H1 (cell line): ENCODE measurements at regions of chr10 and their contacts with region 1.

Region 1: GRCh38 chr10:51960494-51960895 is 261.1 kb upstream of the CSTF2T start:
- DNase-seq: no peak
- H3K4me3 ChIP-seq: 0 out of 8 replicates have a peak overlapping the region, but pooled peaks of 1 of the 4 experiments have one; percentile 20
- H3K27ac ChIP-seq: no peak overlapping the region
- H3K4me1 ChIP-seq: peaks cover 0 to 4% (median 3%) of the 10 kb centered on the region in 4 experiments; a peak in 4 of 7 replicates
- H3K27me3 ChIP-seq: no peaks in the 10 kb centered on the region
- CTCF ChIP-seq: peak in 2 of 3 experiments; percentile 31 to 44; a peak in 2 of 4 replicates
- EP300 ChIP-seq: no peak
- POLR2A ChIP-seq: no peak
- RAD21 ChIP-seq: peak; percentile 70 to 78

Region 2: DNA sequence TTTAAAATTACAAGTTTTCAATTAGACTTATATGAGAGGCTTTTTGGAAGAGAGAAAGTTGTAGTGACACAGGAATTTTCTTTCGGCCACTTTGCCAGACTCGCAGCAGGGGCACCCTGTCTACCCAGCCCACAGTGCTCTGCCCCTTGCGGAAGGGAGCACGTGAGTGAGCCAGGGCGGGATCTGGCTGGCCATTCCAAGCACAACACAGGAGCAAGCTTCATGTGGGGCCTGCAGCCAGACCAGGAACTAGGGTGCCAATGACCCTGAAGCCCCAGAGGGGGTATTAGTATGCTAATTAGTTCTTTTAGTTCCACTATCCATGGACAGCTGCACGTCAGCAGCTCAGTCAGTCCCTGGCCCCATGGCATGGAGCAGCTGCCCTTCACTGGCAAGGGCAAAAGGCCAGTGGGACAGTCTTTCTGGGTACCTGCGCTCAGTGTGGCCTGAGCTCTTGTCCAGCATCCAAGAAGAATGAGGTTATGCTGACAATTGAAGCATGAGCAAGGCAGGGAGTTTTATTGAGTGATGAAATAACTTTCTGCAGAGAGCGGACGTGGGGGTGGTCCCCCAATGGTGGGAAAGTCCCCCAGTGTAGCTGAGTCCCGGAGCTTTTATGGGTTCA is 10.0 kb before region 1 on chr10:
- CTCF ChIA-PET with region 1: interaction called, 10 read pairs
- POLR2A ChIA-PET with region 1: no interaction called
- DNase-seq: no peak
- H3K4me3 ChIP-seq: no peak overlapping the region
- H3K27ac ChIP-seq: no peak overlapping the region
- H3K4me1 ChIP-seq: peaks cover 0 to 4% (median 3%) of the 10 kb centered on the region in 4 experiments; a peak in 4 of 7 replicates
- H3K27me3 ChIP-seq: no peaks in the 10 kb centered on the region
- CTCF ChIP-seq: no peak
- EP300 ChIP-seq: no peak
- POLR2A ChIP-seq: no peak
- RAD21 ChIP-seq: no peak

Region 3: DNA sequence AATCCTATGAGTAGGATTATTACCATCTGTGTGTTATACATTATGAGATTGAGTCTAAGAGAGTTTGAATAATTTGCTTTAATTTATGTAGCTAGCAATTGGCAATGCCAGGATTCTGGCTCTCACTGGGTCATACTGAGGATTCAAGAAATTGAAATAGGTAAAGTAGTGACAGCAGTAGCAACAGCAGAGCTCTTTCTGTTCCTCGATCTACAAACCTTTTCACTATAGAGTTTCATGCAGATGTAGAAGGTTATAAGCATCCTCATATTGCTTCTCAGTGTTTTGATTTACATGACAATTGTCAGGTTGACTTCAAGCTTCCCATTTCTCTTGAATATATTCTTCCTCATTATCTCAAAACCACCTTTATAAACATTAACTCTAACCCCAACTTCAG is 33.0 kb after region 1 on chr10:
- CTCF ChIA-PET with region 1: no interaction called
- POLR2A ChIA-PET with region 1: no interaction called
- DNase-seq: no peak
- H3K4me3 ChIP-seq: no peak overlapping the region
- H3K27ac ChIP-seq: no peak overlapping the region
- H3K4me1 ChIP-seq: no peaks in the 10 kb centered on the region; a peak in 1 of 7 replicates
- H3K27me3 ChIP-seq: no peaks in the 10 kb centered on the region
- CTCF ChIP-seq: no peak
- EP300 ChIP-seq: no peak
- POLR2A ChIP-seq: no peak
- RAD21 ChIP-seq: no peak

Region 4: DNA sequence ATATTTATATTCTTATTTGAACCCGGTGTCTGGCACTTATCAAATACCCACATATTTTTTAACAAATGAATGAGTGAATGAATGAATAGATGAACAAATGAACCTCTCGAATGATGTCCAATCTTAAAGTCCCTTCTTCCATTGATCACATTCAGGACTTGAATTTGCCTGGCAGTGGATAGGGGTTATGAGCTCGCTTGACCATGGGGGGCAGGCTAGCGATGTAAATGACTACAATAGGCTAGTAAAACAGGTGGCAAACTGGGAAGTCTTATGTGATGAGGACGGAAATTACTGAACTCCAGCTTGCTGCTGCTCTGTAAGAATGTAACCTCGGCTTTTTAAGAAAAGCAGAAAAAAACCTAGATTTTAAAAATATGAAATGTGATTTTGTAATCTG is 105.9 kb after region 1 on chr10:
- CTCF ChIA-PET with region 1: no interaction called
- POLR2A ChIA-PET with region 1: no interaction called
- DNase-seq: no peak
- H3K4me3 ChIP-seq: no peak overlapping the region
- H3K27ac ChIP-seq: no peak overlapping the region
- H3K4me1 ChIP-seq: no peaks in the 10 kb centered on the region
- H3K27me3 ChIP-seq: no peaks in the 10 kb centered on the region
- CTCF ChIP-seq: peak in 2 of 3 experiments; percentile 2 to 41; a peak in 2 of 4 replicates
- EP300 ChIP-seq: no peak
- POLR2A ChIP-seq: no peak
- RAD21 ChIP-seq: peak; percentile 22 to 39; a peak in 3 of 4 replicates